ENCODE measurements at regions of chr2 and their contacts with region 1.

Region 1: DNA sequence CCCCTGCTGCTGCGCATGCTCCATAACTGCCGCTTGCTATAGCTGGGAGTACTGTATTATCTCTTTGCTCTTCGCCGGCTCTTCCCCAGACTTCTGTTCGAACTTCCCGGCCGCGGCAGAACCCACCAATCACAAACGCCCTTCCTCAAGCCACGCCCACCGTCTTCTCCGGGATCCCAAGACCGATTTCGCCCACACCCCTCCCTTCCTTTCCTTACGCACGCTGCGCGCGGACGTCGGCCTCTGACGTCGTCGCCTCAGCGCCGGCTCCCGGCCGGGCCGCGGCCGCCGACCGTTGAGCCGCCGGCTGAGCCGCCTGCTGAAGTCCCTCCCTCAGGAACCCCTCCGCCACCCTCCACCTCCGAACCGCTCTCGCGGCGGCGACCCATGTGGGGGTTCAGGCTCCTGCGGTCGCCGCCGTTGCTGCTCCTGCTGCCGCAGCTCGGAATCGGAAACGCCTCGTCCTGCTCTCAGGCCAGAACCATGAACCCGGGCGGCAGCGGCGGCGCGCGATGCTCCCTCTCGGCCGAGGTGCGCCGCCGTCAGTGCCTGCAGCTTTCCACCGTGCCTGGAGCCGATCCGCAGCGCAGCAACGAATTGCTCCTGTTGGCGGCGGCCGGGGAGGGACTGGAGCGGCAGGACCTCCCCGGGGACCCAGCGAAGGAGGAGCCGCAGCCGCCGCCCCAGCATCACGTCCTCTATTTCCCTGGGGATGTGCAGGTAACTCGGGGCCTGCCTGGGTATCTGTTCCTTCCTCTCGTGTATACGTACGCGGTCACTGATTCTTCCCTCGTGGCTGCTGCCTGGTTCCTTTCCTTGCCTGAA is at the start of gene C2orf69:
- DNase-seq: peak; percentile 86
- H3K4me3 Mint-ChIP-seq: peak within 1 kb of the TSS; percentile 100
- H3K27ac Mint-ChIP-seq: peak within 1 kb of the TSS; percentile 99
- H3K4me1 Mint-ChIP-seq: peaks cover 39% of the 10 kb centered on the region
- H3K27me3 Mint-ChIP-seq: peaks cover 3% of the 10 kb centered on the region
- total RNA-seq, gene C2orf69: 16.6 and 18.0 TPM in 2 replicates

Region 2: GRCh38 chr2:199850718-199851500 is 60.4 kb before region 1 on chr2 and contains the start of gene FTCDNL1:
- intact Hi-C with region 1: loop called (anchors 1 kb)
- DNase-seq: peak; percentile 66
- H3K4me3 Mint-ChIP-seq: peak within 1 kb of the TSS; percentile 94
- H3K27ac Mint-ChIP-seq: peak within 1 kb of the TSS; percentile 86
- H3K4me1 Mint-ChIP-seq: peaks cover 6% of the 10 kb centered on the region
- H3K27me3 Mint-ChIP-seq: peaks cover 15% of the 10 kb centered on the region
- total RNA-seq, gene FTCDNL1: 1.7 and 2.1 TPM in 2 replicates